Dendritic cell treated with granulocyte-macrophage colony-stimulating factor and Interleukin-4, amounts not matched to agents 40 ng/mL and 50 ng/mL, for 4 days (primary cell): ENCODE measurements at regions of chr12 and their contacts with region 1.

Region 1: DNA sequence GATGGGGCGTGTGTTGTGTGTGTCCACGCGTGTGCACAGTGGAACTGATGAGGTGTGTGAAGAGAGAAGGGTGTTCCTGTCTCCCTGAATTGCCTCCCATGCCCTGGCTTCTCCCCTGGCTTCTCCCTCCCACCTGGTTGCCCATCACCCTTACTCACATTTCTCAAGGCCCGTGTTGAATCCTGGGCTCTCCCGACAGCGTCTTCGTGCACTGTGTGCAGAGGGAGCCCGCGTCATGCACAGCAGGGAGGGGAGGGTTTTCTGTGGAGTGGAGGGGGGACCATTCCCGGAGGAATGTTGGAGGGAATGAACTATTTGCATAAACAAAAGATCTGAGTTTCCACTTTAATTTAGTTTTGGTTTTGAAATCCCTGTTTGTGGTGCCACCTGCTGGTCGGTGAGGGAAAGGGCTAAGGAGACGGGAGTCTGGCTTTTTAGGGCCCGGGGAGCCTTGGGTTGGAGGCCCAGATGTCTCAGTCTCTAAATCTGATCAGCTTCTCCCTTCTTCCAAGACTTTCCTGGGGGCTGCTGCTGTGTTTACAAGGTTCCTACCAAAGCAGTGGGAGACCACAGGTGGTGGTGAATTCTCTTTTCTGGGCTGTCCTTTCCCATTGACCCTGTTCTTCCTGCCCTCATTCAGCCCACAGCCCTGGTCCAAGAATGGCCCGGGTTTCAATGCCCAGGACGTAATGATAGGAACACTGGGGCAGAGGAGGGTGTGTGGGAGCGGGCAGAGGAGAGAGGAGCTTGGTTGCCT is at the start of gene C1R:
- H3K4me3 Mint-ChIP-seq: peak within 1 kb of the TSS; percentile 81
- H3K27ac Mint-ChIP-seq: peak within 1 kb of the TSS; percentile 58
- H3K4me1 Mint-ChIP-seq: peaks cover 24% of the 10 kb centered on the region
- H3K27me3 Mint-ChIP-seq: peaks cover 34% of the 10 kb centered on the region

Region 2: GRCh38 chr12:7060353-7060954 is 32.0 kb before region 1 on chr12 and contains the start of gene C1S:
- intact Hi-C with region 1: loop called (anchors 5 kb)
- H3K4me3 Mint-ChIP-seq: no peak within 1 kb of the TSS
- H3K27ac Mint-ChIP-seq: peak within 1 kb of the TSS; percentile 55
- H3K4me1 Mint-ChIP-seq: peaks cover 47% of the 10 kb centered on the region
- H3K27me3 Mint-ChIP-seq: peaks cover 24% of the 10 kb centered on the region